ENCODE measurements at regions of chr18 and their contacts with region 1.

Region 1: GRCh38 chr18:63505566-63506335 is 29.0 kb downstream of the SERPINB5 start:
- DNase-seq: peak; percentile 79
- H3K4me3 ChIP-seq: no peak overlapping the region
- H3K27ac ChIP-seq: peak overlapping the region; percentile 31
- H3K4me1 ChIP-seq: peaks cover 18% of the 10 kb centered on the region
- H3K27me3 ChIP-seq: no peaks in the 10 kb centered on the region
- CTCF ChIP-seq: peak; percentile 83

Region 2: GRCh38 chr18:63339920-63340484 is 165.7 kb before region 1 on chr18:
- CTCF ChIA-PET with region 1: no interaction called
- POLR2A ChIA-PET with region 1: no interaction called
- intact Hi-C with region 1: loop called (anchors 10 kb)
- DNase-seq: peak; percentile 80
- H3K4me3 ChIP-seq: no peak overlapping the region
- H3K27ac ChIP-seq: no peak overlapping the region
- H3K4me1 ChIP-seq: peaks cover 33% of the 10 kb centered on the region
- H3K27me3 ChIP-seq: no peaks in the 10 kb centered on the region
- CTCF ChIP-seq: peak; percentile 77

Measured in A673 (cell line).